Endothelial cell of umbilical vein (primary cell): ENCODE measurements at regions of chr16 and their contacts with region 1.

Region 1: GRCh38 chr16:10405386-10405939 is 19.6 kb downstream of the ATF7IP2 start:
- DNase-seq: peak; percentile 92
- H3K4me3 ChIP-seq: no peak overlapping the region
- H3K27ac ChIP-seq: peak overlapping the region; percentile 36
- H3K4me1 ChIP-seq: peaks cover 11% of the 10 kb centered on the region
- H3K27me3 ChIP-seq: no peaks in the 10 kb centered on the region
- CTCF ChIP-seq: no peak
- POLR2A ChIP-seq: no peak

Region 2: GRCh38 chr16:10266809-10267208 is 138.7 kb before region 1 on chr16:
- CTCF ChIA-PET with region 1: no interaction called
- POLR2A ChIA-PET with region 1: no interaction called
- dilution Hi-C with region 1: no loop called
- intact Hi-C with region 1: no loop called
- DNase-seq: no peak
- H3K4me3 ChIP-seq: no peak overlapping the region
- H3K27ac ChIP-seq: no peak overlapping the region
- H3K4me1 ChIP-seq: no peaks in the 10 kb centered on the region
- H3K27me3 ChIP-seq: no peaks in the 10 kb centered on the region
- CTCF ChIP-seq: no peak
- POLR2A ChIP-seq: no peak

Region 3: GRCh38 chr16:10312784-10313724 is 92.4 kb before region 1 on chr16:
- CTCF ChIA-PET with region 1: no interaction called
- POLR2A ChIA-PET with region 1: no interaction called
- dilution Hi-C with region 1: no loop called
- intact Hi-C with region 1: no loop called
- DNase-seq: no peak
- H3K4me3 ChIP-seq: no peak overlapping the region
- H3K27ac ChIP-seq: no peak overlapping the region
- H3K4me1 ChIP-seq: no peaks in the 10 kb centered on the region
- H3K27me3 ChIP-seq: no peaks in the 10 kb centered on the region
- CTCF ChIP-seq: no peak
- POLR2A ChIP-seq: no peak

Region 4: GRCh38 chr16:10428433-10429168 is 23.1 kb after region 1 on chr16:
- CTCF ChIA-PET with region 1: no interaction called
- POLR2A ChIA-PET with region 1: no interaction called
- dilution Hi-C with region 1: no loop called
- intact Hi-C with region 1: loop called (anchors 1 kb)
- DNase-seq: no peak
- H3K4me3 ChIP-seq: no peak overlapping the region
- H3K27ac ChIP-seq: no peak overlapping the region
- H3K4me1 ChIP-seq: no peaks in the 10 kb centered on the region
- H3K27me3 ChIP-seq: no peaks in the 10 kb centered on the region
- CTCF ChIP-seq: no peak
- POLR2A ChIP-seq: no peak